ENCODE measurements at regions of chr20 and their contacts with region 1.

Region 1: DNA sequence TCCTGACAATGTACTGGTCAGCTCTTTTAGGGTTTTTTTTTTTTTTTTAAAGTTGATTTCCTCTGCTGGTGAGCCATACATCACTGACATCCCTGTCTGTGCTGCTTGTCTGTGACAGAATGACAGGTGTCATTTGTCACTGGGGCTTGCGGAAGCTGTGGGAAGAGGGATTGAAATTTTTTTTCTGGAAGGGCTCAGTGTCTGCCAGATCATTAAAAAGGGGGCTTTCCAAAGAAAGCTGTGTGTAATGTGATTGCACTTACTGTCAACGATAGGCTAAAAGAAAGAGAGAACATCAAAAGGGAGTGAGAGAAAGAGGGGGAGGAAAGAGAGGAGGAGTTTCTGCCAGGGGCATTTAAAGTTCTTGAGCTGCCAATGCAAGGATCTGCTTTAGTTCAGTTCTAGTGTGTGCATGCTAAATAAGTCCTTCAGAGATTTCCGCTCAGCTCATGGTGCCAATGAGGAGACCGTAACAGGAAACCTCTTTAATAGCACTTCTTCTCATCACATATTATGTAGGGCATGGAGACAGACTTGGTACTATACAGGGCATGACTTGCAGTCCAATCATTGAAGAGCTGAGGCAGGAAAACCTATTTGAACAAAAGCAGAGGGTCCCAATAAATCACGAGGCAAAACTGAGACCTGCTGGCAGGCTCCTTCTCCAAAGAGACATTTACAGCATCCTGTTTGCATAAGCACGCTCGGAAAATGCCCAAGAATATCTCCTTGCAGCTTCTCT is 177.2 kb downstream of the TSHZ2 start:
- DNase-seq: no peak
- H3K4me3 Mint-ChIP-seq: peak overlapping the region; percentile 45
- H3K27ac Mint-ChIP-seq: peak overlapping the region; percentile 75
- H3K4me1 Mint-ChIP-seq: peaks cover 64% of the 10 kb centered on the region
- H3K27me3 Mint-ChIP-seq: no peaks in the 10 kb centered on the region

Region 2: DNA sequence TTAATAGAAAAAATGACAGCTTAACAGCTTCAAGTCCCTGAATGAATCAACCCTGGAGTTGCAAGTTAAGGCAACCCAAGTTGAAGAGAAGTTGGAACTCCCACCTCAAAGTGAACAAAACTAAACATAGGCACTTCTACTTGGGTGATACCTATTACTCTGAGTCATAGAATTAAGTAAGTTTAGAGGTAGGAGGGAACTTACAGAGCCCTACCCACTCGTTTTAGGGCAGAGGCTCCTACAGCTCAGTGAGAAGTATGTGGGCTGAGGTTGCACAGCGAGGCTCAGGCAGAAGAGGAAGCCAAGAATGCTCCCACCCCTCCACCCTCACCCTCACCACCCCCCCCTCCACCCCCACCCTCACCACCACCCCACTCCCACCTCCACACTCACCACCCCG is 1649.0 kb before region 1 on chr20:
- intact Hi-C with region 1: no loop called
- DNase-seq: peak; percentile 48
- H3K4me3 Mint-ChIP-seq: no peak overlapping the region
- H3K27ac Mint-ChIP-seq: peak overlapping the region; percentile 81
- H3K4me1 Mint-ChIP-seq: peaks cover 86% of the 10 kb centered on the region
- H3K27me3 Mint-ChIP-seq: no peaks in the 10 kb centered on the region

Region 3: DNA sequence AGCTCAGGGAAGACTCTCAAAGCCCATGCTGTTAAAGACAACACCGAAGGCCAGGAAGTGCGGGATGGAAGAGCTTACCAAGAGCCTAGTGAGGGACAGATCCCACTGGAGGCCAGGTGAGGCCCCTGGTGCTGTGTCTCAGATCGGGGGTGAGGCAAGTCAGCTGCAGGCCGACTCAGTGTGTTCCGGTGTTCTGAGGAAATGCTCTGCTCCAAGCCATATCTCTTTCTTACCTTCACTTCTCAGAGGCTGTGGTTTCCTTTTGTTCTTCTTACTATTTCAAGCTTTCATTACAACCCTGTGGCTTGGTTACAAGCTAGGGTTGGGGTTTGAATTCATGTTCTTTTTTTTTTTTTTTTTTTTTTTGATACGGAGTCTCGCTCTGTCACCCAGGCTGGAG is 843.5 kb before region 1 on chr20:
- intact Hi-C with region 1: loop called (anchors 5 kb)
- DNase-seq: peak; percentile 10
- H3K4me3 Mint-ChIP-seq: no peak overlapping the region
- H3K27ac Mint-ChIP-seq: no peak overlapping the region
- H3K4me1 Mint-ChIP-seq: peaks cover 30% of the 10 kb centered on the region
- H3K27me3 Mint-ChIP-seq: no peaks in the 10 kb centered on the region

Region 4: GRCh38 chr20:52410182-52410647 is 739.1 kb before region 1 on chr20:
- intact Hi-C with region 1: loop called (anchors 5 kb)
- DNase-seq: peak; percentile 38
- H3K4me3 Mint-ChIP-seq: peak overlapping the region; percentile 53
- H3K27ac Mint-ChIP-seq: peak overlapping the region; percentile 66
- H3K4me1 Mint-ChIP-seq: peaks cover 43% of the 10 kb centered on the region
- H3K27me3 Mint-ChIP-seq: no peaks in the 10 kb centered on the region

Region 5: DNA sequence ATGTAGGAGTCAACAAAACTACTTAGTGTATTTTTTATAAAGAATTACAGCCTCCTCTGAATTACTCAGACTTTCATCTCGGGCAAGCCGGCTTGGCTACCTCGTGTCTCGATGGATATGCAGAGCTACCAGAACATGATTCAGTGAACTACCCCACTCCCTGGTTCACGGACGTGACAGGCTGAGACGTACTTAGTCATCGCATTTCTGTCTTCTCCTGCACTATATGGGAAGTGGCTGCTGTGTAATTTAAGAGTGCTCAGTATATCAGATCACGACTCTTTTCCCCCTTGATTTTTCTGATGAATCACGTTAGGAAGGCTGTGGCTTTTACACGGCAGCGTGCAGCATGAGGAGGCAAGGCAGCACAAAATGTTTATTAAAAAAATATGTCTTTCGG is 655.1 kb before region 1 on chr20:
- intact Hi-C with region 1: no loop called
- DNase-seq: no peak
- H3K4me3 Mint-ChIP-seq: no peak overlapping the region
- H3K27ac Mint-ChIP-seq: no peak overlapping the region
- H3K4me1 Mint-ChIP-seq: peaks cover 13% of the 10 kb centered on the region
- H3K27me3 Mint-ChIP-seq: no peaks in the 10 kb centered on the region

Region 6: GRCh38 chr20:53021934-53022333 is 127.4 kb before region 1 on chr20:
- intact Hi-C with region 1: loop called (anchors 1 kb)
- DNase-seq: peak; percentile 33
- H3K4me3 Mint-ChIP-seq: peak overlapping the region; percentile 24
- H3K27ac Mint-ChIP-seq: peak overlapping the region; percentile 90
- H3K4me1 Mint-ChIP-seq: peaks cover 87% of the 10 kb centered on the region
- H3K27me3 Mint-ChIP-seq: no peaks in the 10 kb centered on the region

Region 7: GRCh38 chr20:53202777-53203176 is 53.5 kb after region 1 on chr20:
- intact Hi-C with region 1: loop called (anchors 2 kb)
- DNase-seq: no peak
- H3K4me3 Mint-ChIP-seq: no peak overlapping the region
- H3K27ac Mint-ChIP-seq: no peak overlapping the region
- H3K4me1 Mint-ChIP-seq: peaks cover 23% of the 10 kb centered on the region
- H3K27me3 Mint-ChIP-seq: no peaks in the 10 kb centered on the region

Region 8: GRCh38 chr20:53668992-53669391 is 519.7 kb after region 1 on chr20:
- intact Hi-C with region 1: no loop called
- DNase-seq: no peak
- H3K4me3 Mint-ChIP-seq: no peak overlapping the region
- H3K27ac Mint-ChIP-seq: no peak overlapping the region
- H3K4me1 Mint-ChIP-seq: peaks cover 5% of the 10 kb centered on the region
- H3K27me3 Mint-ChIP-seq: peaks cover 2% of the 10 kb centered on the region

Measured in activated T-helper 1 cell treated with anti-CD3 and anti-CD28 coated beads, Interleukin-12 subunit alpha, Interleukin-12 subunit beta, Interleukin-2, Interleukin-4 antibody, amounts not matched to agents 30 ng/mL and 10 ng/mL and 1 ng/mL, durations not matched to agents 14 hours and 24 hours and 36 hours (primary cell).